Right cardiac atrium (tissue), 5 donors: ENCODE measurements at regions of chr2 and their contacts with region 1.

Region 1: GRCh38 chr2:46769809-46770208 is 145.8 kb downstream of the MCFD2 start:
- DNase-seq: no peak
- ATAC-seq: no peak
- H3K4me3 ChIP-seq: no peak overlapping the region
- H3K27ac ChIP-seq: no peak overlapping the region
- H3K4me1 ChIP-seq: peaks cover 2% of the 10 kb centered on the region
- H3K27me3 ChIP-seq: no peaks in the 10 kb centered on the region

Region 2: GRCh38 chr2:46699934-46700256 is 69.9 kb before region 1 on chr2:
- intact Hi-C with region 1: loop called in 2 of 4 experiments (anchors 10 kb)
- DNase-seq: peak in 1 of 3 donors; percentile 40
- ATAC-seq: no peak
- H3K4me3 ChIP-seq: peak overlapping the region; percentile 94
- H3K27ac ChIP-seq: peak overlapping the region; percentile 90
- H3K4me1 ChIP-seq: peaks cover 5% of the 10 kb centered on the region
- H3K27me3 ChIP-seq: no peaks in the 10 kb centered on the region

Region 3: DNA sequence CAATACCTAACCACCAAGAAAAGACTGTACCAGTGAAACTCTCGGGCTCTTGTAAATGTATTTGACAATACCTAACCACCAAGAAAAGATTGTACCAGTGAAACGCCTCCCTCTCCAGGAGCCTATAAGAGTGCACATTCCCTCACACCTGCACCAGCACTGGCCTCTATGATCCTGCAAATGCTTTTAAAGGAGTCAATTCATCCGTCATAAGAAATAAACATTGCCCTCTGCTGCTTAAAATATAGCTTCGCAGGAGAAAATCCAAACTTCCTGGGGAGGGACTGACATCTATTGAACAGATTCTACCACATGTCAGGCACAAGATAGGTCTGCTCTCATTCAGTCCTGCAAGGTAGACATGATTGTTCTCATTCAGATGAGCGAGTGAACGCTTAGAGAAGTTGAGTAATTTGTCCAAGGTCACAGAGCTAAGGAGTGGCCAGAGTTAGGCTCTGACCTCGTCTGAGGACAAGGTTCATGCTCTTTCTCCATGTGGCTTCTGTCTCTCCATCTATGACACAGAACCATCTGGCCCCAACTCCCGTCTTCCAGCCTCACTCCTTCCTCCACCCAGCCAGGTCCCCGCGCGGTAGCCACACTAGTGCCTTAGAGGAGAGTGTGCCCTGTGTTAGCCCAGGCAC is 107.1 kb after region 1 on chr2:
- intact Hi-C with region 1: no loop called
- DNase-seq: peak in 2 of 3 donors; percentile 44 to 69
- ATAC-seq: peak; percentile 25 to 30
- H3K4me3 ChIP-seq: no peak overlapping the region
- H3K27ac ChIP-seq: peak overlapping the region; percentile 30
- H3K4me1 ChIP-seq: peaks cover 33% of the 10 kb centered on the region
- H3K27me3 ChIP-seq: no peaks in the 10 kb centered on the region